Calu3 (cell line): ENCODE measurements at regions of chr12 and their contacts with region 1.

Region 1: DNA sequence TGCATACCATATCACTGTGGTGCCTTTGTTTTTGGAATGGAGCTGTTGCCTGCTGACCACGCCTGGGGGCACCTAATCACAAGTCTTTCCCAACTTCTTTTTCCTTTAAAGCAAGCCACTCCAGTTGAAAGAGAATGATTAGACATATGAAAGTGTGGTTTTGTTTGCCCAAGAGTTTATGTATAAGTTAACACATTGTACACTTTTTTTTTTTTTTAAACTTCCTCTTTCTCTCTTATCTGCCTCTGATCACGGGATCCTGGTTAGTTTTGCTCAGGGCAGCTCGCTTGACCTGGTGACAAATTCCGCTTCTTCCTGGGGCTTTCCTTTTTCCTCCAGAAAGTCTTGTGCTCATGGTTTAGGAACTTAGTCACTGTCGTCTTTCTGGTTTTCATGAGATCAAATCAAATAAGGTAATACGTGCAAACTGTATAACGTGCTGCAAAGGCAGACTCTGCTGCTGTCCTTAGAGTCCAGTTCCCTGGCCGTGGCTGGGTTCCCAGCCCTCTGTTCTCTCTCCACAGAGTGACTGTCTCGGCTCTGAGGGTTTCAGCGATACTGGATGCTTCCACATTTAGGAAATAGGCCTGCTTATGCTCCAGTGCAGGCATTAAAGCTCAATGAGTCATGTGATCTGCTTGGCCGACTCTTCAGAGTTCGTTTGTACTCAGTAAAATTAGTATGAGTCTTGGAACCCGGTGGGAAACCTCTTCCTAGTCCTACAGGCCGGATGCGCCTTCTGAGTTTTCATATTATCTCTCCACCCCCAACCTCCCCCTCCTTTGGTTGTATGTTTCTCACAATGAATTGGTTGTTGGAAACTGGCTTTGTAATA is 15.2 kb downstream of the RASSF3 start:
- DNase-seq: peak; percentile 85
- H3K4me3 Mint-ChIP-seq: peak overlapping the region; percentile 53
- H3K27ac Mint-ChIP-seq: peak overlapping the region; percentile 90
- H3K4me1 Mint-ChIP-seq: peaks cover 54% of the 10 kb centered on the region
- H3K27me3 Mint-ChIP-seq: no peaks in the 10 kb centered on the region
- CTCF ChIP-seq: no peak

Region 2: GRCh38 chr12:64532734-64533351 is 92.6 kb before region 1 on chr12:
- CTCF ChIA-PET with region 1: no interaction called
- intact Hi-C with region 1: no loop called
- DNase-seq: no peak
- H3K4me3 Mint-ChIP-seq: no peak overlapping the region
- H3K27ac Mint-ChIP-seq: no peak overlapping the region
- H3K4me1 Mint-ChIP-seq: no peaks in the 10 kb centered on the region
- H3K27me3 Mint-ChIP-seq: peaks cover 15% of the 10 kb centered on the region
- CTCF ChIP-seq: no peak

Region 3: DNA sequence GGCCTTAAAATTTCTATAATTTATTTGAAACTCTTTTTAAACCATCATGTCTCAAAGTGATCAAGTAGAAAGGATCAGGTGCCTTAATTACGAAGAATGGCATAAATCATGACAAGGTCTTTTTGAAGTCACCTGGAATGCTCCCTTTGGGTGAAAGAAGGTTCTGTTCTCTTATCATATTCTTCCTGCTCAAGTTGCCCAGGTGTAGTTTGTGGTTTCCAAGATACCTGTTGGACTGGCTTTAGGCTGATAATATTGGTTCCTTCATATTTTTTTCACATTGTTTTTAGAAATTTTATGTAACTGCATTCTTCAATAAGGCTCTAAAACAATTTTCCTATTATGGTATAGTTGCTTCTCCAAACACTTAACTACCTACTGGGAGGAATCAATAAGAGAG is 14.0 kb after region 1 on chr12:
- CTCF ChIA-PET with region 1: interaction called, 10 read pairs
- intact Hi-C with region 1: loop called (anchors 1 kb)
- DNase-seq: peak; percentile 63
- H3K4me3 Mint-ChIP-seq: peak overlapping the region; percentile 13
- H3K27ac Mint-ChIP-seq: peak overlapping the region; percentile 95
- H3K4me1 Mint-ChIP-seq: peaks cover 63% of the 10 kb centered on the region
- H3K27me3 Mint-ChIP-seq: no peaks in the 10 kb centered on the region
- CTCF ChIP-seq: no peak

Region 4: DNA sequence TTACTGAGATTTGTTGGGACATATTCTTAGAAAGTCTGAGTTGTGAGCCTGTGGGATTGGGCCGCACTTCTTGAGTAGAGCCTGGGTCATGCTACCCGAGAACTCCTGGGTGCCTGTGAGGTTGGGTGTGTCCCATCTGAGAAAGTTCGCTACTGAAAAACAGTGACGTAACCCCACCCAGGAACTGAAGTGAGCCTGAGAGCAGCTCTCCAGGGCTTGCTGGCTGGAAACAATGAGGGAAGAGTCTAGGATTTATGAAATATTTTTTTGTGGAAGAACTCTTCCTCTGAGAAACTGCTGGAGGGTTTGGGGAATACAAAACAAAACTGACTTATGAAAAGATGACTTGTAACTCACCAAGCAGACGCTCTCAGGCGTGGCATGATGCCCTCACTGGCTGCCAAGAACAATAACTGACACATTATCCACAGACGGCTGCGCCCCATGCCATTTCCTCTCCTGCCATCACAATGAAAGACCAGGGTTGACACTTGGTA is 54.1 kb after region 1 on chr12:
- CTCF ChIA-PET with region 1: interaction called, 10 read pairs
- intact Hi-C with region 1: loop called (anchors 1 kb)
- DNase-seq: peak; percentile 71
- H3K4me3 Mint-ChIP-seq: peak overlapping the region; percentile 59
- H3K27ac Mint-ChIP-seq: peak overlapping the region; percentile 82
- H3K4me1 Mint-ChIP-seq: peaks cover 77% of the 10 kb centered on the region
- H3K27me3 Mint-ChIP-seq: no peaks in the 10 kb centered on the region
- CTCF ChIP-seq: no peak